Aorta (tissue), 5 donors: ENCODE measurements at regions of chr5 and their contacts with region 1.

Region 1: DNA sequence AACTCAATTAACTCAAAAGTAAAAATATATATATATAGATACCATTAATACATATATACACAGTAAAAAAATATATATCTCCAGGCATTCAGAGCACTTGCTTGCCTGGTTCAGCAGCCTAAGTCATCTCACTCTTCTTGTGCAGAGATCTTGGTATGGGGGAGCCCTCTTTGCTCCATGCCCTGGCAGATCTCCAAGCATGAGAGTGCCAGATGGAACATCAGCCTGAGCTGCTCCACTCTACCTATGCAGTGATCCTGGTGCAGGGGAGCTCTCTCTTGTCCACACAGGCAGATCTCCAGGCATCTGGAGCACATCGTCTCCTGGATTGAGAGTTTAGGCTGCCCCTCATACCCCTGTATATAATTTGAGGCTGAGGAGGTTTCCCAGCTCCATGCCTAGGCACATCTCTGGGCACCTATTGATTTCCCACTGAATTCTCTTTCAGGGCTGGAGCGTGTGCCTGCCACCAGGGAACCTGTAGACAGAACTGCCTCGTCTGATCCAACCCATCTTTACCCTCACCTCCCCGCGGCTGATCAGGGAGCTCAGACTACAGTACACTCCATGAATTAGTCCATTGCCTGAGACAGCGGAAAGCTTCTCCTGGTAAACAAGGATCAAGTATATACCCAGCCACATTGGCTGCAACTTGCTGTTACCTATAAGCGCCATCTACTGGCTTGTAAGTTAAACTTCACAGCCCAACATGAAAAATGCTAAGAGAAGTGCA is 342.4 kb upstream of the GRIA1 start:
- DNase-seq: peak in 1 of 2 donors; percentile 21
- ATAC-seq: peak; percentile 69
- H3K4me3 ChIP-seq: no peak overlapping the region
- H3K27ac ChIP-seq: no peak overlapping the region
- H3K4me1 ChIP-seq: no peaks in the 10 kb centered on the region
- H3K27me3 ChIP-seq: no peaks in the 10 kb centered on the region

Region 2: DNA sequence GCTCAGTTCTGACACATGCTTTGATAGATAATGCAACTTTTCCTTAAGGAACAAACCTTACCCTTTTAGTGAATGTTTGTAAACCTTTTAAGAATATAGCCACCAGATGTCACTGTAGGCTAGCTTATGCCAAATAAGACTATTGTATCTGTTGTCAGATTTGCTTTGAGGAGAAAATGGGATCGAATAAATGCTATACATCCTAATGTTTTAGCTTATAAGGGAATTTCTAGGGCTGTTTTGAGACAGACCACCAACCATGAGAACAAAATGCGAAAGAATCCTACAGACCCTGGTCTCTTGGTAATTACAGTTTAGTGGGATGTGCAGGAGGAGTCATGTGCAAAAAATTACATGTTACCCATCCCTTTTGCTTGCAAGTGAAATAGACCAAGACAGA is 615.3 kb before region 1 on chr5:
- intact Hi-C with region 1: loop called in 1 of 2 experiments (anchors 1 kb)
- DNase-seq: no peak
- ATAC-seq: no peak
- H3K4me3 ChIP-seq: no peak overlapping the region
- H3K27ac ChIP-seq: no peak overlapping the region
- H3K4me1 ChIP-seq: no peaks in the 10 kb centered on the region
- H3K27me3 ChIP-seq: no peaks in the 10 kb centered on the region

Region 3: DNA sequence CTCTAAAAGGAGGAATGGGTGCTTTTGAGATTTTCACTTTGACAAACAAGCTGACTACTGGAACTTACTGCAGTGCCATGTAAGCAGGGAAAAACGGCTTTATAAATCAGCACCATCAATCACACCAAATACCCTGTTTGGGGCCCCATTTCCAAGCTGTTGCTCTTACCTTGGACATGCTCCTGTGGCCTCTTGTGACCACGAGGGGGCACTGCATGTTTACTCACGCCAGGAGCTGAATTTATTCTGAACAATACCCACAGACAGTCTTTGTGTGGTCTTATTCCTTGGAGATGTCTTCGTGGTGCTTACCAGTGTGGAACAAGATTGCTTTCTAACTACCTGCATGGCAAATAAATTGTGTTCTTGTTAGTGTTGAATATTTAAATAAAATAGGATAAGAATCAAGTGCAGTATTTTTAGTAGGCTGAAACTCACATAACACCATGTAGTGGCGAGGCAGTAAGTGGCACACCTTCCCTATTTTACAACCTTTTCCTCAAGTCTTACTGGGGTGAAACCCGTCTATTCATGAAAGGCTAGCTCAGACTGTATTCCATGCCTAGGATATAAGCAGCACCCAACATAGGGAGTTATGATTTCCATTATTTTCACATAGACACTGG is 587.4 kb before region 1 on chr5:
- intact Hi-C with region 1: loop called (anchors 2 kb)
- DNase-seq: peak; percentile 65 to 85
- ATAC-seq: no peak
- H3K4me3 ChIP-seq: no peak overlapping the region
- H3K27ac ChIP-seq: no peak overlapping the region
- H3K4me1 ChIP-seq: no peaks in the 10 kb centered on the region
- H3K27me3 ChIP-seq: no peaks in the 10 kb centered on the region